ENCODE measurements at regions of chr16 and their contacts with region 1.

Region 1: GRCh38 chr16:18801197-18801972 is at the start of gene ARL6IP1:
- DNase-seq: peak; percentile 99
- H3K4me3 ChIP-seq: peak within 1 kb of the TSS; percentile 83 to 97 (median 95)
- H3K27ac ChIP-seq: peak within 1 kb of the TSS; percentile 85
- H3K4me1 ChIP-seq: peaks cover 42% of the 10 kb centered on the region
- H3K27me3 ChIP-seq: no peaks in the 10 kb centered on the region
- CTCF ChIP-seq: peak; percentile 62 to 94
- total RNA-seq, gene ARL6IP1: 88.7 to 236 TPM

Region 2: GRCh38 chr16:18789850-18790724 is 11.3 kb before region 1 on chr16 and contains the start of gene RPS15A:
- CTCF ChIA-PET with region 1: interaction called, 5 read pairs
- dilution Hi-C with region 1: no loop called
- in situ Hi-C with region 1: no loop called
- intact Hi-C with region 1: loop called (anchors 1 kb)
- DNase-seq: peak; percentile 96
- H3K4me3 ChIP-seq: peak within 1 kb of the TSS; percentile 80 to 98 (median 92)
- H3K27ac ChIP-seq: peak within 1 kb of the TSS; percentile 85
- H3K4me1 ChIP-seq: peaks cover 40% of the 10 kb centered on the region
- H3K27me3 ChIP-seq: no peaks in the 10 kb centered on the region
- CTCF ChIP-seq: no peak
- total RNA-seq, gene RPS15A: 682 to 1,206 TPM